PC-9 (cell line): ENCODE measurements at regions of chr12 and their contacts with region 1.

Region 1: DNA sequence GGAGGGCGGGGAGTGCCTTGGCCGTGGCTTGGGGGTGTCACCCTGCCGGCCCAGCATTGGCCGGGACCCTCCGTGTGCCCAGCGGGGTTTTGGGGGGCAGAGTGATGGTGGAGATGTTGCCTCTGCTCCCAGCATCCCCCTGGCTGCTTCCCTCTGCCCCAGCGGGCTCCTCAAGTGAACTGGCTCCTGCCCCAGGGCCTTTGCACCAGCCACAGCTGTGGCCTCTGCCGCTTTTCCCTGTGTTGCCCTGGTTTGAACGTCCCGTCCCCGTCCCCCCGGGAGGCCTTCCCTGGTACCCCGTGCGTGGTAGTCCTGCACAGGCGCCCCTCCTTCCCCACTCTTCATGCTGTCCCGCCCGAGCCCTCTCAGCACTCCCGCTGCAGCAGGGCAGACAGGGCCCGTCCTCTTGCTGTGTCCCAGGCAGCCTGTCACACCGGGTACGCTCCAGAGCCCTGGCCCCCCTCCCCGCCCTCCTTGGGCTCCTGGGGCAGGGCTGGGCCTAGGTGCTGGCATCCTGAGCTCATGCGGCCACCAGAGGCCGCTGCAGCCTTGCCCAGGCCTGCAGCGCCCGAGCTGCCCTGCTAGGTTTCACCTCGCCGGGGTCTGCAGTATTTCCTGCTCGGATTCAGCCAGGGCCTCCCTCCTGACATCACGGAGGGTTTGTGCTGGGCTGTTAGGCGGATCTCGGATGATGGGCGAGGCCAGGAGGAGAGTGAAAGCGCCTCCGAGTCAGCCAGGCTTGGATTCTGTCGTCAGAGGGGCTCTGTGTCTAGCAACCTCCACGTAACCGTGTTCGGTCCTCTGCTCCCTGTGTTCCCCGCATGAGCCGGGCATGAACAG is 9.5 kb downstream of the NOC4L start:
- DNase-seq: peak in 1 of 2 experiments; percentile 66
- H3K4me3 ChIP-seq: no peak overlapping the region
- H3K27ac ChIP-seq: no peak overlapping the region
- H3K4me1 ChIP-seq: no peaks in the 10 kb centered on the region
- H3K27me3 ChIP-seq: no peaks in the 10 kb centered on the region
- CTCF ChIP-seq: peak; percentile 93

Region 2: DNA sequence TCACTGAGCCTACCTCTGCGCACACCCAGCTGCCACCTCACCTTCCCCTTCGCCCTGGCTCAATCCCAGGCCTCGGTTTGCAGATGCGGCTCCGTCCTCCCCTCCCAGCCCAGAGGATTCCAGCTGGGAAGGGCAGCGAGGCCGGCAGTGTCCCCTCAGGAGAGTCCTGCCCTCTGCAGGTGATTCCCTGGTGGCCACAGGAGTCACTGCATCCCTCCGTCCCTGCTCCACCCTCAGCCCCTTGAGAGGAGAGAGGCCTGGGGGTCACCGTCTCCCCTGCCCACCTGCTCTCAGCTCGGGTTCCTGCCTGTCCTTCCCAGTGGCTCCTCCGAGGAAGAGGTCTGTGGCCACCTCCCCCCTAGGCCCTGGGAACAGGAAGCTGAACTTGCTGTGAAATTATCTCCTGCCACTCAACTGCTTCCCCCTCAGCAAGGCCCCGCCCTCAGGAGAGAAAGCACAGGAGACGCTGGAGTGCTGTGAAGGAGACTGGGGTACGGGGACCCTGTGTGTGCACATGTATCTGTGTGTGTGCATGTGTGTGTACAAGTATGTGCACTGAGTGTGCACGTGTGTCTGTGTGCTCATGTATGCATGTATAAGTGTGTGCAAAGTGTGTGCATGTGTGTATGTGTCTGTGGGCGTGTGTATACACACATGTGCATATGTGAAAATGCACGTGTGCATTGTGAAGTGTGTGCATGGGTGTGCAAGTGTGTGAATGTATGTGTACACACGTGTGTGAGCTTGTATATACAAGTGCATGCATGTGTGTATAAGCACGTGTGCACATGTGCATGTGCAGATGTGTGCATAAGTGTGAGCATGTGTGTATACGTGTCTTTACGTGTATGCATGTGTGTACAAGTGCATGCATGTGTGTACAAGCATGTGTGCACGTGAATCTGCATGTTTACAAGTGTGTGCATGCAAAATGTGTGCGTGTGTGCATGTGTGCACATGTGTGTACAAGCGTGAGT is 188.8 kb after region 1 on chr12:
- CTCF ChIA-PET with region 1: no interaction called
- POLR2A ChIA-PET with region 1: no interaction called
- intact Hi-C with region 1: loop called (anchors 5 kb)
- DNase-seq: peak in 1 of 2 experiments; percentile 25
- H3K4me3 ChIP-seq: no peak overlapping the region
- H3K27ac ChIP-seq: no peak overlapping the region
- H3K4me1 ChIP-seq: no peaks in the 10 kb centered on the region
- H3K27me3 ChIP-seq: peaks cover 100% of the 10 kb centered on the region
- CTCF ChIP-seq: peak; percentile 56

Region 3: DNA sequence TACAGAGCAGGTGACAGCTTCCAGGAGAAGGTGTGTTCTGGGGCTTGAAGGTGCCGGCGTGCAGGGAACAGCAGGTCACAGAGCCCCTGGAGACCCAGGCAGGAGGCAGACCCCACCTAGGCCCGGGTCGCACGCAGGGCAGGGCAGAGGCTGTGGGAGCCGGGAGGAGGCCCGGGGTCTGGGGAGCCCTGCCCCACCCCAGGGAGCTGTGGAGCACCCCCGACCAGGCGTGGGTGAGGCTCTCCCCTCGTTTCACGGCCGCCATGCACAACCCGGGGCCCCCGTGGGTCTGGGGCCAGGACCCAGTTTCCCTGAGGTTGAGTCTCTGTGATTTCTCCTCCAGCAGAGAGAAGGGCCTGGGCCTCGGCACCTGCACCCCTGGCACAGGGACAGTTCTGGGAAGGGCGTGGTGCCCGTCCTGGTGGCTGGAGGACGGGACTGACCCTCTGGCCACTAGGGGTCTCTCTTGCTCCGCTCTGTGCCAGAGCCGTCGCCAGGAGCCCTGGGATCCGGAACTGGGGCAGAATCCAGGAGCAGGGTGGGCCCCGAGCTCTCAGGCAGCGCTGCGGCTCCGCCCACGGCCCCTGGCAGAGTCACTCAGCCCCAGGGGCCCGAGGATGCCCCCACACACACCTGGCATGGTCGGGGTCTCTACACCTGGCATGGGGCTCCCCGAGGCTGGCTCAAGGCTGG is 261.1 kb after region 1 on chr12:
- CTCF ChIA-PET with region 1: interaction called, 12 read pairs
- POLR2A ChIA-PET with region 1: no interaction called
- intact Hi-C with region 1: loop called (anchors 1 kb)
- DNase-seq: peak; percentile 53 to 84
- H3K4me3 ChIP-seq: no peak overlapping the region
- H3K27ac ChIP-seq: no peak overlapping the region
- H3K4me1 ChIP-seq: no peaks in the 10 kb centered on the region
- H3K27me3 ChIP-seq: peaks cover 50% of the 10 kb centered on the region
- CTCF ChIP-seq: peak; percentile 91

Region 4: DNA sequence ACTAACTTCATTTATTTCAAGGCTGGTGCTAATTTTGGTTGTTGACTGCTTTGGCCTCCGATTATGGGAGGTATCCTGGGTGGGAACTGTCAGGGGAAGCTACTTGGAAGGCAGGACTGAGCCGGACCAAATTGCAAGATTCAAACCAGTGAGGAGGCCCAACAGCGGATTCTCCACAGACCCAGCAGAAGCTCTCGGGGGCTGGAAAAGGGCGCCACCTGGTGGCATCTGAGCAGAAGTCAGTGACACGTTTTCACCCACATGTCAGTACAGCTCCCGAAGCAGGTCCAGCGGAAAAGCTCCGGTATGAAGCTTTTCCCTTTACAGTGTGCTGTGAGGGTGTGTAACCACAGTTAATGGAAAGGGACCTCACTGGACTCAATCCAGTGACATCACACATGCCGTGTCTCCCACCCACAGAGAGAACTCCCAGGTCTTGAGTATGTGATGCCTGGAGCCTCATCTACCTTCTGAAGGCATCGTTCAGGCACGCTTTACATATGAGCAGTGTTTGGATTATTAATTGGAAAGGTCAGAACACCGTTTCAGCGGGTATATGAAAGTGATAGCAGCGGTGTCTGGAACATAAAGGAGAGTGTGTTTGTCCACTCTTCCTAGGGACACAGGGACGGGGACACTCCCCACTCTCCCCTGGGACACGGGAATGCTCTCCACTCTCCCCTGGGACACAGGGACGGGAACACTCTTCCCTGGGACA is 461.3 kb after region 1 on chr12:
- CTCF ChIA-PET with region 1: interaction called, 5 read pairs
- POLR2A ChIA-PET with region 1: no interaction called
- intact Hi-C with region 1: loop called (anchors 10 kb)
- DNase-seq: peak; percentile 63 to 72
- H3K4me3 ChIP-seq: no peak overlapping the region
- H3K27ac ChIP-seq: no peak overlapping the region
- H3K4me1 ChIP-seq: no peaks in the 10 kb centered on the region
- H3K27me3 ChIP-seq: peaks cover 45% of the 10 kb centered on the region
- CTCF ChIP-seq: peak; percentile 93